Posterior vena cava (tissue), 2 donors: ENCODE measurements at regions of chr18 and their contacts with region 1.

Region 1: GRCh38 chr18:25732862-25733261 is 357.6 kb downstream of the SS18 start:
- DNase-seq: no peak

Region 2: DNA sequence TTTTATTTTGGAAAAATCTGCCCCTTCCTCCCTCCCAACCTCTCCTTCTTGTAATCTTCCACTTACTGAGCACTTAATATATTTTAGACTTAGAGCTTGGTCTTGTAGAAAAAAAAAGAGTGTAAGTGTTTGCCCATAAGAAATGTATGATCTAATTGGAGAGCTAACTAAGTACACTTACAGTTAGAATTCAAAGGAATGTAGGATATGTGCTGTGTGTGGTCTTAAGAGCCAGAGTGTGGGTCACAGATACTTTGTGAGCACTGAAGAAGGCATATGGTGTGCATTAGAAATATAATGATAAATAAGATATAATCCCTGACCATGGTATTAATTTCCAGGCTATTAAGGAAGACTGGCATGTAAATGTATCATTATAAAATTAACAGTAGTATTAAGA is 289.1 kb before region 1 on chr18:
- intact Hi-C with region 1: loop called in 1 of 2 experiments (anchors 2 kb)
- DNase-seq: no peak

Region 3: GRCh38 chr18:25658476-25658875 is 74.4 kb before region 1 on chr18:
- intact Hi-C with region 1: no loop called
- DNase-seq: no peak